Left ventricle myocardium superior (tissue), 1 donor: ENCODE measurements at regions of chrX and their contacts with region 1.

Region 1: DNA sequence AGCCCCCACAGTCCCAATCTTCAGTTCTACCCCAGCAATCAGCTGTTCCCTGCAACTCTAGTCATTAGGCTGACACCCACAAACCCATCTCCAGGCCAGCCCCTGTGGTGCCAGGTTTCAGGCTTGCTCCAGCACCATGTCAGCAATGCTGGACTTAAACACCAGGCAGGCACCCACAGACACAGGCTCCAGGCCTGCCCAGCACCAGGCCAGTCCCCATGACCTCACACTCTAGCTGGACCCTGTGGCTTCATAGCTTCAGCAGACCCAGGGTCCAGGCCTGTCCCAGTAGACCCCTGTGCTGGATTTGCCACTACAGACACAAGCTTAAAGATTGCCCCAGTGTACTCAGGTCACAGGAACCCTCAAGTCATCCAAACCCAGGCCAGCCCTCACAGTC is 300.3 kb downstream of the CHIC1 start:
- DNase-seq: no peak
- ATAC-seq: no peak

Region 2: GRCh38 chrX:74133156-74133796 is 270.0 kb after region 1 on chrX:
- intact Hi-C with region 1: loop called (anchors 5 kb)
- DNase-seq: no peak
- ATAC-seq: peak; percentile 76